ENCODE measurements at regions of chr1 and their contacts with region 1.

Region 1: GRCh38 chr1:32013386-32014198 is at the start of gene KHDRBS1:
- DNase-seq: peak; percentile 94
- H3K4me3 ChIP-seq: peak within 1 kb of the TSS; percentile 88
- H3K27me3 ChIP-seq: no peaks in the 10 kb centered on the region
- CTCF ChIP-seq: no peak
- polyA plus RNA-seq, gene KHDRBS1: 24.1 and 27.5 TPM in 2 replicates

Region 2: GRCh38 chr1:31739346-31739745 is 274.2 kb before region 1 on chr1:
- CTCF ChIA-PET with region 1: no interaction called
- POLR2A ChIA-PET with region 1: interaction called, 15 read pairs
- DNase-seq: no peak
- H3K4me3 ChIP-seq: no peak overlapping the region
- H3K27me3 ChIP-seq: no peaks in the 10 kb centered on the region
- CTCF ChIP-seq: no peak

Region 3: GRCh38 chr1:32028746-32029145 is 15.2 kb after region 1 on chr1:
- CTCF ChIA-PET with region 1: no interaction called
- POLR2A ChIA-PET with region 1: no interaction called
- DNase-seq: no peak
- H3K4me3 ChIP-seq: no peak overlapping the region
- H3K27me3 ChIP-seq: no peaks in the 10 kb centered on the region
- CTCF ChIP-seq: no peak

Region 4: GRCh38 chr1:32500387-32501209 is 487.0 kb after region 1 on chr1:
- CTCF ChIA-PET with region 1: no interaction called
- POLR2A ChIA-PET with region 1: no interaction called
- DNase-seq: no peak
- H3K4me3 ChIP-seq: peak overlapping the region; percentile 54
- H3K27me3 ChIP-seq: no peaks in the 10 kb centered on the region
- CTCF ChIP-seq: no peak